Activated B cell treated with CpG ODN at 0.5 μM for 24 hours (primary cell): ENCODE measurements at regions of chr16 and their contacts with region 1.

Region 1: DNA sequence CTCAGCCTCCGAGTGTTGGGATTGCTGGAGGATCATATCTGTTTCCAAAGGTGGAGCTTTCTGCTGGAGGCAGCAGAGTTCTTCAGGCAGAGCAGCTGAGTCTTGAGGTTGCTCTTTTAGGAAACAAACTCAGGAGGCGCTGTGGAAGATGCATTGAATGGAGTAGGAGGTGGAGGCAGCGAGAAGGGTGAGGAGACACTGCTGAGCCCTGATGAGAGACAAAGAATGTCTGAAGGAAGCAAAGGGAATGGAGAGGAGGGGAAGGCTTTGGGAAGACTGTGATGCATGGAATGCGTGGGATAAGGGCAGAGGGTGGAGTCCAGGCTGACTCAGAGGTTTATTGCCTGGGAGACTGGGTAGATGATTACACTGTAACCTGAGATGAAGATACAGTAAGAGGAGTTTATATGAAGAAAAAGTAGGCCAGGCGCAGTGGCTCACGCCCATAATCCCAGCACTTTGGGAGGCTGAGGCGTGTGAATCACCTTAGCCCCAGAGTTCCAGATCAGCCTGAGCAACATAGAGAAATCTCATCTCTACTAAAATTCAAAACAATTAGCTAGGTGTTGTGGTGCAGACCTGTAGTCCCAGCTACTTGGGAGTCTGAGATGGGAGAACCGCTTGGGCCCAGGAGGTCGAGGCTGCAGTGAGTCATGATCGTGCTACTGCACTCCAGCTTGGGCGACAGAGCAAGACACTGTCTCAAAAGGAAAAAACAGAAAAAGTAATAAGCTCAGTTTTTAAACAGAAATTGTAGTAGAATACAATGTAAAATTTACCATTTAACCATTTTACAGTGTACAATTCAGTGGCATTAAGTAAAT is 17.8 kb upstream of the TMEM219 start:
- DNase-seq: no peak
- ATAC-seq: no peak
- H3K4me3 Mint-ChIP-seq: no peak overlapping the region
- H3K27ac Mint-ChIP-seq: no peak overlapping the region
- H3K4me1 Mint-ChIP-seq: no peaks in the 10 kb centered on the region
- H3K27me3 Mint-ChIP-seq: peaks cover 16% of the 10 kb centered on the region
- CTCF ChIP-seq: no peak

Region 2: DNA sequence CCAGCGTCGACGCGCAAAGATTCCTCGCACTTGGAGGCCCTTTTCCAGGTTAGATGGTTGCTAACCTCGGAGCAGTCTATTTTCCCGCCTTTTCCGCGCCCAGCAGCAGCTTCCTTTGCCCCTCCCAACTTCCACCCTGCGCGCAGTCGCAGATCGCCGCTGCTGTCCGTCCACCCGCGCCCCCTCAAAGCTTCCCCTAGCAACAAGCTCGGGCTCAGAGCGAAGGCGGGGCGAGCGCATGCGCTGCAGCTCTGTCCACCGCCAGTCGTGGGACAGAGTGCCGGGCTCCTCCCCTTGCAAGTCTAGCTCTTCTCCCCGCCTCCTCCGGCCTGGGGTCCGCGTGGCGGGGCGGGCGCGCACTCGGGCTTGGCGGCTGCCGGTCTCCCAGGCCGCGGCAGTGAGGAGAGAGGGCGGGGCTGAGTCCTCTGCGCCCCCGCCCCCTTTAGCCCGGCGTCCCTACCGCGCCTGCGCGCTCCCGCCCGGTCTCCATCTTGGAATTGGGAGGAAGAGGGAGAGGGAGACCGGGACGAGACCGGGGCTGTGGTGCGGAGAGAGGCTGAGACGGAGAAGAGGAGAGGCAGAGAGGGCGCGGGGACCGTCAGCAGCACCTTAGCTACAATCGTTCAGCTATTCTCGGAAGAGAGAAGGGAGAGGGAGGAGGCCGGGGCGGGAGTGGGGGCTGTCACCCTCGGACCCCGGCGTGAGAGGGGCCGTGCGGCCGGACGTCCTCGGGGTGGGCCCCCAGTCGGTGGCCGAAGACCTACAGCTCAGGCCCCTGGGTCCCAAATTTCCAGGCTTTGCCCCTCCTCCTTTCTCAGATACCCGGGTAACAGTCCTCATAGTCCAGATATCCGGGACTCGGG is 29.6 kb after region 1 on chr16 and contains the start of gene TAOK2:
- CTCF ChIA-PET with region 1: no interaction called
- POLR2A ChIA-PET with region 1: interaction called, 11 read pairs
- intact Hi-C with region 1: no loop called
- DNase-seq: peak; percentile 95
- ATAC-seq: peak; percentile 99
- H3K4me3 Mint-ChIP-seq: peak within 1 kb of the TSS; percentile 96
- H3K27ac Mint-ChIP-seq: peak within 1 kb of the TSS; percentile 90
- H3K4me1 Mint-ChIP-seq: peaks cover 39% of the 10 kb centered on the region
- H3K27me3 Mint-ChIP-seq: no peaks in the 10 kb centered on the region
- CTCF ChIP-seq: no peak
- total RNA-seq, gene TAOK2: 30.5 and 36.1 TPM in 2 replicates

Region 3: DNA sequence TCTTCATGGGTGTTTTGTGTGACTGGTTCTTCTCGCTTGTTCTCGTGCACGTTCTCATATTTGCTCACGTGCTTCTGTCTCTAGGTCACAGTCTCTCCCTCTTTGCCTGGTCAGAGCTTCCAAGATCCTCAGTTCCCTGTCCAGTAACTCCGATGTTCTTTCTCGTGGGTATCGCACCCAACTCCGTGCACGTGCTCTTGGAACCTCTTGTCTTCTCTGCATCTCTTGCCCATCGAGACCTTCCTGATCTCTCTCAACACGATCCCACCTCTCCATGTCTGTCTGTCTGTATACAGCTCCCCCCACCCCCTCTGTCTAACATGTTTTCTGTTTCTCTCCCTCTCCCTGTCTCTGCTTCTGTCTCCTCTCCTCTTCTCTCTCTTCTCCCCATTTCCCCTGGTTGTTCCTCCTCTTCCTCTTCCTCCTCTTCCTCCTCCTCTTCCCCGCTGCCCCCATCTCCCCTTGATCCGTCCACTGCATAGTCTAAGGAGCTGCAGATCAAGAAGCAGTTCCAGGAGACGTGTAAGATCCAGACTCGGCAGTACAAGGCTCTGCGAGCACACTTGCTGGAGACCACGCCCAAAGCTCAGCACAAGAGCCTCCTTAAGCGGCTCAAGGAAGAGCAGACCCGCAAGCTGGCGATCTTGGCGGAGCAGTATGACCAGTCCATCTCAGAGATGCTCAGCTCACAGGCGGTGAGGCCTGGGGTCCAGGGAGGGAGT is 45.2 kb after region 1 on chr16:
- CTCF ChIA-PET with region 1: no interaction called
- POLR2A ChIA-PET with region 1: interaction called, 15 read pairs
- intact Hi-C with region 1: no loop called
- DNase-seq: no peak
- ATAC-seq: no peak
- H3K4me3 Mint-ChIP-seq: no peak overlapping the region
- H3K27ac Mint-ChIP-seq: no peak overlapping the region
- H3K4me1 Mint-ChIP-seq: peaks cover 3% of the 10 kb centered on the region
- H3K27me3 Mint-ChIP-seq: no peaks in the 10 kb centered on the region
- CTCF ChIP-seq: no peak